HAP-1 (cell line): ENCODE measurements at regions of chr4 and their contacts with region 1.

Region 1: GRCh38 chr4:48557478-48557877 is 67.4 kb downstream of the ZAR1 start:
- DNase-seq: no peak
- H3K4me3 ChIP-seq: no peak overlapping the region
- H3K4me1 ChIP-seq: no peaks in the 10 kb centered on the region
- H3K27me3 ChIP-seq: no peaks in the 10 kb centered on the region

Region 2: GRCh38 chr4:48127682-48128394 is 429.6 kb before region 1 on chr4:
- in situ Hi-C with region 1: loop called (anchors 25 kb)
- DNase-seq: peak; percentile 66 to 83
- H3K4me3 ChIP-seq: no peak overlapping the region
- H3K4me1 ChIP-seq: peaks cover 4% of the 10 kb centered on the region
- H3K27me3 ChIP-seq: no peaks in the 10 kb centered on the region

Region 3: GRCh38 chr4:48680848-48681568 is 123.5 kb after region 1 on chr4:
- in situ Hi-C with region 1: no loop called
- DNase-seq: no peak
- H3K4me3 ChIP-seq: no peak overlapping the region
- H3K4me1 ChIP-seq: no peaks in the 10 kb centered on the region
- H3K27me3 ChIP-seq: no peaks in the 10 kb centered on the region